B cell (primary cell): ENCODE measurements at regions of chr6 and their contacts with region 1.

Region 1: DNA sequence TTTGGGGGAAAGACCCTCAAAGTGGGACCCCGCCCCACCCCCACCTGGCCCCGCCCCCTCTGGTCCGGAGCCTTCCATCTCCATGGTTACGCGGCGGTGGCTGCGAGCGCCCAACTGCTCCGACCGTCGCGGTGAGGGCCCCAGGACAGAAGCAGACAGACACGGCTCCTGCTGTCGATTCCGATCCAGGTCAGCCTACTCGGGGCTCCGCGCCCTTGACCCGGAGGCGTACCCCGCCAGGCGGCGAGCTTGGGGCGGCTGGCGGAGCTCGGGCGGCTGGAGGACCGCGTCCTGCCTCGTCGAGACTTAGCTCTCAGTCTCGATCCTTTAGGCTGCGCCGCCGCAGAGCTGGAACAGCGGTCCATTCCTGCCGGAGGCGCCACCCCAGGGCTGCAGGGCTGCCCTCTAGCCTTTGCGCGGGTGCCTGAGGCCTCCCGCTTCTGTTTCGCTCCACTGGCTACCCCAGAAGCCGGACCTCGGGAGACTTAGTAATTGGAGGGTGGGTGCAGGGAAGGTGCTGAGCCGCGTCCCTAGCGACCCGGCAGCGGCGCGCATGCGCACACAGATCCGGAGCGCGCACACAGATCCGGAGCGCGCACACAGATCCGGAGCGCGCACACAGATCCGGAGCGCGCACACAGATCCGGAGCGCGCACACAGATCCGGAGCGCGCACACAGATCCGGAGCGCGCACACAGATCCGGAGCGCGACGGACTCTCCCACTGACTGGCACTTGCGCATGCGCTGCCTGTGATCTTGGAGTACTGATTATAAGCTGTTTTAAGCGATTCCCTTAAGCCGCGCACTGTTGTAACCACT is at the start of gene CFAP206:
- DNase-seq: peak; percentile 91
- ATAC-seq: peak; percentile 75
- H3K4me3 ChIP-seq: peak within 1 kb of the TSS; percentile 83 to 98 (median 94)
- H3K4me3 Mint-ChIP-seq: peak within 1 kb of the TSS; percentile 91
- H3K27ac ChIP-seq: peak within 1 kb of the TSS; percentile 57 to 81
- H3K27ac Mint-ChIP-seq: peak within 1 kb of the TSS; percentile 86
- H3K4me1 ChIP-seq: peaks cover 4 to 10% of the 10 kb centered on the region in 2 donors
- H3K4me1 Mint-ChIP-seq: peaks cover 9% of the 10 kb centered on the region
- H3K27me3 ChIP-seq: peaks cover 0 to 7% (median 0%) of the 10 kb centered on the region in 4 experiments
- H3K27me3 Mint-ChIP-seq: peaks cover 8% of the 10 kb centered on the region
- CTCF ChIP-seq: no peak
- total RNA-seq, gene CFAP206: not detected in 2 replicates

Region 2: DNA sequence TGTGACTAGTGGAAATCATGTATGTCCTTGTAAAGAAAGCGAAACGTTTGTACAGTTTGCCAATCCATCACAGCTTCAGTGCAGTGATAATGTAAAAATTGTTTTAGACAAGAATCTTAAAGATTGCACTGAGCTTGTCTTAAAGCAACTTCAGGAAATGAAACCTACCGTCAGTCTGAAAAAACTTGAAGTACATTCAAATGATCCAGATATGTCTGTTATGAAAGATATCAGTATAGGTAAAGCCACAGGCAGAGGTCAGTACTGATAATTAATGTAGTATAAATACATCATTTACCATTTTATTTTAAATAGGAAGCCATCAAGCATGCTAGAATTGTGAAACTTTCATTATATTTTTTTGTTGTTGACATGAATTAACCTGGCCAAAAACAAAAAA is 146.6 kb before region 1 on chr6:
- CTCF ChIA-PET with region 1: no interaction called
- POLR2A ChIA-PET with region 1: no interaction called
- intact Hi-C with region 1: no loop called
- DNase-seq: no peak
- ATAC-seq: no peak
- H3K4me3 ChIP-seq: no peak overlapping the region
- H3K4me3 Mint-ChIP-seq: no peak overlapping the region
- H3K27ac ChIP-seq: no peak overlapping the region
- H3K27ac Mint-ChIP-seq: no peak overlapping the region
- H3K4me1 ChIP-seq: no peaks in the 10 kb centered on the region
- H3K4me1 Mint-ChIP-seq: peaks cover 14% of the 10 kb centered on the region
- H3K27me3 ChIP-seq: no peaks in the 10 kb centered on the region
- H3K27me3 Mint-ChIP-seq: no peaks in the 10 kb centered on the region
- CTCF ChIP-seq: no peak

Region 3: GRCh38 chr6:87322304-87323212 is 85.6 kb before region 1 on chr6 and contains the start of gene SMIM8:
- CTCF ChIA-PET with region 1: interaction called, 3 read pairs
- POLR2A ChIA-PET with region 1: interaction called, 4 read pairs
- intact Hi-C with region 1: loop called (anchors 1 kb)
- DNase-seq: peak; percentile 87
- ATAC-seq: peak; percentile 100
- H3K4me3 ChIP-seq: peak within 1 kb of the TSS; percentile 78 to 87 (median 81)
- H3K4me3 Mint-ChIP-seq: peak within 1 kb of the TSS; percentile 95
- H3K27ac ChIP-seq: peak within 1 kb of the TSS; percentile 42 to 74
- H3K27ac Mint-ChIP-seq: peak within 1 kb of the TSS; percentile 88
- H3K4me1 ChIP-seq: peaks cover 4 to 13% of the 10 kb centered on the region in 2 donors
- H3K4me1 Mint-ChIP-seq: peaks cover 25% of the 10 kb centered on the region
- H3K27me3 ChIP-seq: no peaks in the 10 kb centered on the region
- H3K27me3 Mint-ChIP-seq: no peaks in the 10 kb centered on the region
- CTCF ChIP-seq: peak; percentile 99
- total RNA-seq, gene SMIM8: 18.7 and 19.1 TPM in 2 replicates

Region 4: GRCh38 chr6:87393022-87393622 is 15.0 kb before region 1 on chr6:
- CTCF ChIA-PET with region 1: interaction called, 22 read pairs
- POLR2A ChIA-PET with region 1: no interaction called
- intact Hi-C with region 1: loop called (anchors 2 kb)
- DNase-seq: peak; percentile 79
- ATAC-seq: peak; percentile 86
- H3K4me3 ChIP-seq: no peak overlapping the region
- H3K4me3 Mint-ChIP-seq: no peak overlapping the region
- H3K27ac ChIP-seq: no peak overlapping the region
- H3K27ac Mint-ChIP-seq: no peak overlapping the region
- H3K4me1 ChIP-seq: no peaks in the 10 kb centered on the region
- H3K4me1 Mint-ChIP-seq: peaks cover 5% of the 10 kb centered on the region
- H3K27me3 ChIP-seq: no peaks in the 10 kb centered on the region
- H3K27me3 Mint-ChIP-seq: no peaks in the 10 kb centered on the region
- CTCF ChIP-seq: peak; percentile 84

Region 5: DNA sequence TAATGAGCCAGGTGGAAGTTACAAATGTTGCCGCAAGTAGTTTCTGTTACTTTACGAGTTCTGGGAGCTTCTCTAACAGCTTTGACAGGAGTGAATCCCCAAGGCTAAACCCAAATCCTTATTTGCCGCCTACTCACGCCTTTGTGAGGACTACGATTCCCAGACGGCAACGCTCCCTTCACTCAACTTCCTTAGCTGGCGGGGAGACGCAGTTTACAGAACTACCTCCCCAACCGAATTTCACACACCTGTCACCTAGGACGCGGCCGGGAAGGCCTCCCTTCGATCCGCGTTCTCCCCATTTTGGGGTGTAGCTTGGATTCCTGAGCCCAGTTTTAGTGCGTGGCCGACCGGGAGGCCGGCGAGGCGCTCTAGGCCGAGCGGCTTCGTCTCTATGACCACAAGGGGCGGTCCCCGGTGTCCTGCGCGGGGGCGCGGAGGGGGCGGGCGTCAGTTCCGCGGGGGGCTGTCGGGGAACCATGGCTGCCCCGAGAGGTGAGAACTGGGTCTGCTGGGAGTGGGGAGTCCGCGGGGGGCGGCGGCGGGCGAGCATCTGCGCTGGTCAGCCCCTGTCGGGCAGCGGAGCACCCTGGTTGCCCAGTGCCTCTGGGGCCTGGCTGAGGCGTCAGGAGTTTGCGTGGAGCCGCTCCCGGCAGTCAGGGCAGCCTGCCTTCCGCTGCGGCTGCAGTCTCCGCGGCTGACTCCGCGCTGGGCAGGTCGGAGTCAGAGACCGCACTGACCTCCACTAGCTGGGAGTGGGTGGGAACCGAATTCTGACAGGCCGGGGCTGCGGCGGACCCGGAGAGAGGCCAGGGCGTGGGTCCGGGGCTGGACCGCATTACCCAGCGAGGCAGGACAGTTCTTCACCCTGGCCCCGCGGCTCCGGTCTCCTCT is 64.7 kb after region 1 on chr6 and contains the start of gene SLC35A1:
- CTCF ChIA-PET with region 1: no interaction called
- POLR2A ChIA-PET with region 1: no interaction called
- intact Hi-C with region 1: loop called (anchors 1 kb)
- DNase-seq: peak; percentile 93
- ATAC-seq: peak; percentile 97
- H3K4me3 ChIP-seq: peak within 1 kb of the TSS; percentile 72 to 95 (median 85)
- H3K4me3 Mint-ChIP-seq: peak within 1 kb of the TSS; percentile 99
- H3K27ac ChIP-seq: peak within 1 kb of the TSS; percentile 85 to 98
- H3K27ac Mint-ChIP-seq: peak within 1 kb of the TSS; percentile 100
- H3K4me1 ChIP-seq: peaks cover 7 to 11% of the 10 kb centered on the region in 2 donors
- H3K4me1 Mint-ChIP-seq: peaks cover 13% of the 10 kb centered on the region
- H3K27me3 ChIP-seq: peaks cover 0 to 7% (median 0%) of the 10 kb centered on the region in 4 experiments
- H3K27me3 Mint-ChIP-seq: peaks cover 9% of the 10 kb centered on the region
- CTCF ChIP-seq: peak; percentile 27
- total RNA-seq, gene SLC35A1: 15.1 and 15.6 TPM in 2 replicates

Region 6: GRCh38 chr6:87589693-87590549 is 181.8 kb after region 1 on chr6 and contains the starts of genes ORC3 and RARS2:
- CTCF ChIA-PET with region 1: no interaction called
- POLR2A ChIA-PET with region 1: no interaction called
- intact Hi-C with region 1: loop called (anchors 5 kb)
- DNase-seq: peak; percentile 94
- ATAC-seq: peak; percentile 99
- H3K4me3 ChIP-seq: peak within 1 kb of the TSS; percentile 74 to 100 (median 96)
- H3K4me3 Mint-ChIP-seq: peak within 1 kb of the TSS; percentile 96
- H3K27ac ChIP-seq: peak within 1 kb of the TSS; percentile 78 to 91
- H3K27ac Mint-ChIP-seq: peak within 1 kb of the TSS; percentile 88
- H3K4me1 ChIP-seq: peaks cover 27 to 28% of the 10 kb centered on the region in 2 donors
- H3K4me1 Mint-ChIP-seq: peaks cover 56% of the 10 kb centered on the region
- H3K27me3 ChIP-seq: no peaks in the 10 kb centered on the region
- H3K27me3 Mint-ChIP-seq: no peaks in the 10 kb centered on the region
- CTCF ChIP-seq: no peak
- total RNA-seq, gene ORC3: 27.8 and 31.2 TPM in 2 replicates
- total RNA-seq, gene RARS2: 37.9 and 38.7 TPM in 2 replicates

Region 7: DNA sequence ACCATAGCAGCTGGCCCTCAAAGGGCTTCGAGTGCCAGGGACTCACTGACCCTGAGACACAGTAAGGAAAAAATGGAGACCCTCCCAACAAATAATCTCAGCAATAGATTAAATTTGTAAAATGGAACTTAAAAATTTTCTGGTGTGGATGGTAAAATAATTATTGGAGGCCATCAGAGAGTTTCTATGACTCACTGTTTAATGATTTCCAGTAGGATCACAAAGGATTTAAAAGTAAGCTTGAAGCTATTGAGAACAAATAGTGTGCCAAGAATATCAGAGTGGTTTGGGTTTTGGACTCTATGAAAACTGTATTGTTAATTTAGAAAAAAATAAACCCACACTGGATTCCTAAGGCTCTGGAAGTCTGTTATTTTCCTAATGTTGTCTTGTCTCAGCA is 409.1 kb after region 1 on chr6:
- CTCF ChIA-PET with region 1: no interaction called
- POLR2A ChIA-PET with region 1: no interaction called
- intact Hi-C with region 1: no loop called
- DNase-seq: no peak
- ATAC-seq: no peak
- H3K4me3 ChIP-seq: no peak overlapping the region
- H3K4me3 Mint-ChIP-seq: no peak overlapping the region
- H3K27ac ChIP-seq: no peak overlapping the region
- H3K27ac Mint-ChIP-seq: no peak overlapping the region
- H3K4me1 ChIP-seq: no peaks in the 10 kb centered on the region
- H3K4me1 Mint-ChIP-seq: no peaks in the 10 kb centered on the region
- H3K27me3 ChIP-seq: no peaks in the 10 kb centered on the region
- H3K27me3 Mint-ChIP-seq: no peaks in the 10 kb centered on the region
- CTCF ChIP-seq: no peak